ENCODE measurements at regions of chr9 and their contacts with region 1.

Region 1: GRCh38 chr9:74773886-74774479 is 113.7 kb downstream of the TRPM6 start:
- DNase-seq: peak; percentile 82
- ATAC-seq: peak; percentile 70

Region 2: GRCh38 chr9:75001719-75002422 is 227.9 kb after region 1 on chr9:
- intact Hi-C with region 1: loop called (anchors 2 kb)
- DNase-seq: no peak
- ATAC-seq: peak; percentile 81